ENCODE measurements at regions of chr10 and their contacts with region 1.

Region 1: DNA sequence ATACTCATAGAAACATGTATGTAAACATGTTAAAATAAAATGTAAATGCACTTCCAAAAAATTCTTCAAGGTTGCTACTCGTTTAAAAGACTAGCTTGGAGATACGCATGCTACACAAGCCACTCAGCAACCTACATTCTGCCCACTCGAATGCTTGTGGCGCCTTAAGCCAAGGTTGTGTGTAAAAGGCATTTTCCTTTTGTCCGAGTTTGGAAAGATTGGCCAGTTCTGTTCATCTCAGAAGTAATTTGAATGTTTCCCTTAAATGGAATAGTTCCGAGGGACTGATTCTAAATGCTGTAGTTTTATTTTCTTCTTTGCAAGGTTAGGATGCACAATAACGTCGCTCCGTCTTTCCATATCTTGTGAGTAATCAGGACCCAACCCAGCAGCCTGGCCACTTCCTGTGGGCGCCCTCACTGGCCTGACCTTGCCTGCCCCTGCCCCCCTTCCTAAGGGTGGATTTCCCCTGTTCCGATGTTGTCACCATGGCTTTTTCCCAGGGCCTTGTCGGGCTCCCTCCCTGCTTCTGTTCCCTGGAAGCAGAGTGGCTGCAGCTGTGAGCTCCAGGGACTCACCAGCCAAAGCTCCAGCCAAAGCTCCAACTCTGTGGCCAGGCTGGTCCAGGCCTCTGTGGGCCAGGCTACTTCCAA is 70.6 kb downstream of the PTPRE start:
- DNase-seq: peak; percentile 53 to 96 (median 72)

Region 2: DNA sequence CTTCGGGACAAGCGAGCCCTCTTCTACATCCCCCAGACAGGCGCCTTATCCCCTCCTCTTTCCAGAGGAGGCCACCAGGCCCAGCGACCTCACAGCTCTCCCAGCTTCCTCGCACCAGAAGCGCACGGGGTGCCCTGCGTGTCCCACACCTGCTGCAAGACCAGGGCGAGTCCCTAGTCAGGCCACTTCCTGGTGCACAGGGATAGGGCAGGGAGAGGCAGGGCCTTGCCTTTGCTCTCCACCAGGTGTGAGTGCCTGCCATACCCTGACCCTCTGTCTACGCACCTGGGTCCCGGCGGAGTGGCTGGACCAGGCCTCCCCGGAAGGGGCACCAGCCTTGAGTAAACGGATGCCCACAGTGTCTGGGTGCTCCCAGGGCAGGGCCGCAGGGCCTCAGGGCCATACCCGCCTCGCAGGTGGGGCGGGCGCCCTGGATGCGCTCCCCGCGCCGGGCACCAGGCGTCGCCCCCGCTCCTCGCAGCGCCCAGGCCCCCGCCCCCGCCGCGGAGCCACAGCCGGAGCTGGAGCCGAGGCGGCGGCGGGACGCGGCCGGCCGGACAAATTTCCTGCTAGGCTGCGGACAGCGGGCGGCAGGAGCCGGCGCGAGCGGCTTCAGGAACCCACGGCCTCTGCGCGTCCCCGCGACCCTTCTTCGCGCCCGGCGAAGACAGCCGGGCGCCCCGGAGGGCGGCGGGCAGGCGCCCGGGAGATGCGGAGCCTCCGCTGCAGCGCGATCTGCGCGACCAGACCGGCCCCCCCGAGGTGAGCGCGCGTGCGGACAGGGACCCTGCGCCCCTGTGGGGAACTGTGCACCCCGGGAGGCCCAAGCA is 70.7 kb before region 1 on chr10 and contains the start of gene PTPRE:
- intact Hi-C with region 1: loop called (anchors 1 kb)
- DNase-seq: peak in 9 of 10 donors; percentile 40 to 96 (median 66)

Region 3: GRCh38 chr10:127919418-127920271 is 57.8 kb before region 1 on chr10:
- intact Hi-C with region 1: loop called (anchors 5 kb)
- DNase-seq: peak in 8 of 10 donors; percentile 39 to 93 (median 56)

Measured in posterior cingulate gyrus (tissue), 11 donors.